ENCODE measurements at regions of chr15 and their contacts with region 1.

Region 1: GRCh38 chr15:90362936-90363212 is 10.8 kb downstream of the ZNF774 start:
- DNase-seq: no peak
- ATAC-seq: peak in 1 of 3 donors; percentile 46
- H3K4me3 ChIP-seq: no peak overlapping the region
- H3K4me3 Mint-ChIP-seq: peak overlapping the region; percentile 9
- H3K27ac ChIP-seq: no peak overlapping the region
- H3K27ac Mint-ChIP-seq: peak overlapping the region; percentile 64 to 78
- H3K4me1 ChIP-seq: peaks cover 13% of the 10 kb centered on the region
- H3K4me1 Mint-ChIP-seq: peaks cover 24 to 36% of the 10 kb centered on the region in 2 donors
- H3K27me3 ChIP-seq: no peaks in the 10 kb centered on the region
- H3K27me3 Mint-ChIP-seq: no peaks in the 10 kb centered on the region
- CTCF ChIP-seq: no peak

Region 2: DNA sequence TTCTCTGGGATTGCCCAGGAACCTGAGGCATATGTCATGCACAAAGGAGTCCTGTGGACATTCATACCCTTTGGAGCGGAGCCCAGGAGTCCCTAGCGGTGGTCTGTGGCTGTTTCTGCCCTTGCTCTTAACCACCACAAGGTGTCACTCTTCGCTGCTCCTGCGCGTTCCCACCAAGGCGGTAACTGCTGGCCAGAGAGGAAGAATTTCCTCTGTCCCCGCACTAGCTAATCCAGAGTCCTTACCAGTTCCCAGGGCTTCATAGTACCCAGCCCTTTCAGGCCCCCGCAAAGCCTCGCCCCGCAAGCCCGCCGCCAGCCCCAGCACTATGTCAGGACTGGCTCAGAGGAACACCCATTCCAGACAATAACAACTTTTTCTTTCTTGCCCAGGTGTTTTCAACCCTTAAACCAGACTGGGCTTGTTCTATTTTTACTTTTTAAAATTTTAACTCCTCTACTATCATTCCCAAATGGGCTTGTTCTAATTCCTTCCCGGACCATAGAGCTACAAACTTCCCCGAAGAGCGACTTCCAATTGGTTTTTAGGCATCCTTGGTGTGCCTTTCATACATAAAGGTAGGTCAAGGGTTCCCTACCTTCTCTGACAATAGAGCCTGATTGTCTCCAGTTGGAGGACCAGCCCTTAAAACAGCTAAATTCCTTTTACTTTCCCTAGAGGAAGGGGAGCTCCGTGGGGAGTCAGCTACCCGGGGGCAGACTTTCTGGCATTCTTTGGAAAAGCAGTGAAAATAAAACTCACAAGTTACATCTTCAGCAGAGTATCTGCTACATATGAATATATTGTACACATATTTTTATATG is 42.6 kb before region 1 on chr15:
- intact Hi-C with region 1: loop called (anchors 5 kb)
- DNase-seq: peak; percentile 55 to 88
- ATAC-seq: peak; percentile 96 to 100 (median 99)
- H3K4me3 ChIP-seq: no peak overlapping the region
- H3K4me3 Mint-ChIP-seq: peak overlapping the region; percentile 3
- H3K27ac ChIP-seq: no peak overlapping the region
- H3K27ac Mint-ChIP-seq: peak overlapping the region in 1 of 2 donors; percentile 23
- H3K4me1 ChIP-seq: peaks cover 4% of the 10 kb centered on the region
- H3K4me1 Mint-ChIP-seq: peaks cover 8 to 9% of the 10 kb centered on the region in 2 donors
- H3K27me3 ChIP-seq: no peaks in the 10 kb centered on the region
- H3K27me3 Mint-ChIP-seq: peaks cover 0 to 3% of the 10 kb centered on the region in 2 donors
- CTCF ChIP-seq: peak; percentile 91

Region 3: DNA sequence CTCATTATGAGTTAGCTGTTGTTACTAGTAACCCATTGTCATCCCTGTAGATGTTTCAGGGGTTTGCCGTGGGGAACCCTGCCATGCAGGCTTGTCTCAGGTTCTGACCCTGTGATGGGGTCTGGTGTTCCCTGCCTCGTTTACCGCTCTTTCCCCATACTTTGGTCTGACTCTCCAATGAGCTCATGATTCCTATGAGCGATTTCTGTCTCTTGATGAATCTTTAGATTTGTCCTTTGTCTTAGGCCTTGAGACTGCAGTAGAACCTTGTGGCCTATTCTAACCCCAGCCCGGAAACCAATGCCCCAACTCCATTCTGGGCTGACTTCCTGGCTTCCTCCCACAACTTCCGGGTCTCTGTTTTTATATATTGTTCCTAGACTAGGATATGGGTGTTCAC is 13.9 kb after region 1 on chr15:
- intact Hi-C with region 1: loop called (anchors 2 kb)
- DNase-seq: peak; percentile 54 to 85
- ATAC-seq: peak; percentile 87 to 96 (median 90)
- H3K4me3 ChIP-seq: no peak overlapping the region
- H3K4me3 Mint-ChIP-seq: peak overlapping the region; percentile 87
- H3K27ac ChIP-seq: peak overlapping the region; percentile 72
- H3K27ac Mint-ChIP-seq: peak overlapping the region; percentile 89 to 93
- H3K4me1 ChIP-seq: peaks cover 40% of the 10 kb centered on the region
- H3K4me1 Mint-ChIP-seq: peaks cover 49 to 52% of the 10 kb centered on the region in 2 donors
- H3K27me3 ChIP-seq: no peaks in the 10 kb centered on the region
- H3K27me3 Mint-ChIP-seq: no peaks in the 10 kb centered on the region
- CTCF ChIP-seq: no peak

Region 4: DNA sequence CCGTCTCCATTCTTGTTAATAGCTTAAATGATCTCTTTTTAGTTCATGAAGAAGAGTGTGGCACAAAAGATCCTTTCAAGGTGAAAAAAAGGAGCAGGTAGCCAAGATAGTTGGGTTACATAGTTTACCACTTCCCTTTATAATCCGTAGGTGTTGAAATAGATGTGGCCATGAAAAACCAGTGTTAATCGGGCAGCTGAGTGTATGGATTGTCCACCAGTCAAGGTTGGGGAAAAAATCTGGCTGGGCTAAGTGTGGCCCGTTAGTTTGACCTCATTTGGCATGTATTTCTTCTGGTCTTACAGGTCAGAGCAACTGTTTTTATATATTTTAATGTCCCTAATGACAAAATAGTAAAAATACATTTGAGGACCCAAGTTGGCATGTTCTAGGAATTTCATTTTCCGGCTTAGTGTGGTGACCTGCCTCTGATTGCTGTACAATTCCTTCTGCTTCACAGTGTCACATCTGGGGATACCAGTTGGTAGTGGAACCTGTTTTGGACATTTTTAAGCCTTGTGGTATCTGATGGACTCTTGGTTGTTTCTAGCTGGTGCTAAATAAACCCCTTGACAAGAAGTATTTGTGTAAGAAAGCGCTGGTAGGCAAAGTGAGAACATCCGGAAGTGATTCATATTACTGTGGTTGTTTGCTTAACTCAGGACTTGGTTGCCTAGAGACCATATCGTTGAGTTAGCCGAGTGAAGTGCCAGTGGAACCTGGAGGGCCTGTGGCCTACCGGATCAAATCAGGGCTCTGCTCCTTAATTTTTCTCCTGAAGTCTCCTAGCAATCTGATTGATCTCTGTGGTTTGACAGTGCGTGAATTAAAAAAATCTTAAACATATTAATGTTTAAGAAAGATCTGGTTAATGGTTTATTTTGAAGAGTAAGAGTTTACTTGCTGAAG is 37.8 kb after region 1 on chr15:
- intact Hi-C with region 1: loop called (anchors 5 kb)
- DNase-seq: peak; percentile 49 to 94
- ATAC-seq: peak; percentile 79 to 96 (median 96)
- H3K4me3 ChIP-seq: peak overlapping the region; percentile 30
- H3K4me3 Mint-ChIP-seq: peak overlapping the region; percentile 85
- H3K27ac ChIP-seq: peak overlapping the region; percentile 99
- H3K27ac Mint-ChIP-seq: peak overlapping the region; percentile 94 to 97
- H3K4me1 ChIP-seq: peaks cover 49% of the 10 kb centered on the region
- H3K4me1 Mint-ChIP-seq: peaks cover 70 to 79% of the 10 kb centered on the region in 2 donors
- H3K27me3 ChIP-seq: no peaks in the 10 kb centered on the region
- H3K27me3 Mint-ChIP-seq: no peaks in the 10 kb centered on the region
- CTCF ChIP-seq: no peak

Region 5: GRCh38 chr15:90412356-90413194 is 49.7 kb after region 1 on chr15:
- intact Hi-C with region 1: loop called (anchors 2 kb)
- DNase-seq: peak in 1 of 2 donors; percentile 48
- ATAC-seq: peak; percentile 29 to 66 (median 38)
- H3K4me3 ChIP-seq: no peak overlapping the region
- H3K4me3 Mint-ChIP-seq: peak overlapping the region; percentile 83
- H3K27ac ChIP-seq: peak overlapping the region; percentile 73
- H3K27ac Mint-ChIP-seq: peak overlapping the region; percentile 89 to 93
- H3K4me1 ChIP-seq: peaks cover 45% of the 10 kb centered on the region
- H3K4me1 Mint-ChIP-seq: peaks cover 86 to 91% of the 10 kb centered on the region in 2 donors
- H3K27me3 ChIP-seq: no peaks in the 10 kb centered on the region
- H3K27me3 Mint-ChIP-seq: no peaks in the 10 kb centered on the region
- CTCF ChIP-seq: no peak

Region 6: DNA sequence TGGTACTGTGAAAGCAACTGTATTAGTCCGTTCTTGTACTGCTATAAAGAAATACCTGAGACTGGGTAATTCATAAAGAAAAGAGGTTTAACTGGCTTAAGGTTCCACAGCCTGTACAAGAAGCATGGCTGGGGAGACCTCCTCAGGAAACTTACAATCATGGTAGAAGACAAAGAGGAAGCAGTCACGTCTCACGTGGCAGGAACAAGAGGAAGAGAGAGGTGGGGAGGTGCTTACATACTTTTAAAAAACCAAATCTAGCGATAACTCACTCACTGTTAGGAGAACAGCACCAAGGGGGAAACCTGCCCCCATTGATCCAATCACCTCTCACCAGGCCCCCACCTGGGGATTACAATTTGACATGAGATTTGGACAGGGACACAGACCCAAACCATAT is 74.1 kb after region 1 on chr15:
- intact Hi-C with region 1: loop called (anchors 5 kb)
- DNase-seq: no peak
- ATAC-seq: peak in 1 of 3 donors; percentile 47
- H3K4me3 ChIP-seq: no peak overlapping the region
- H3K4me3 Mint-ChIP-seq: no peak overlapping the region
- H3K27ac ChIP-seq: no peak overlapping the region
- H3K27ac Mint-ChIP-seq: peak overlapping the region; percentile 54 to 86
- H3K4me1 ChIP-seq: no peaks in the 10 kb centered on the region
- H3K4me1 Mint-ChIP-seq: peaks cover 69 to 72% of the 10 kb centered on the region in 2 donors
- H3K27me3 ChIP-seq: no peaks in the 10 kb centered on the region
- H3K27me3 Mint-ChIP-seq: no peaks in the 10 kb centered on the region
- CTCF ChIP-seq: no peak

Region 7: DNA sequence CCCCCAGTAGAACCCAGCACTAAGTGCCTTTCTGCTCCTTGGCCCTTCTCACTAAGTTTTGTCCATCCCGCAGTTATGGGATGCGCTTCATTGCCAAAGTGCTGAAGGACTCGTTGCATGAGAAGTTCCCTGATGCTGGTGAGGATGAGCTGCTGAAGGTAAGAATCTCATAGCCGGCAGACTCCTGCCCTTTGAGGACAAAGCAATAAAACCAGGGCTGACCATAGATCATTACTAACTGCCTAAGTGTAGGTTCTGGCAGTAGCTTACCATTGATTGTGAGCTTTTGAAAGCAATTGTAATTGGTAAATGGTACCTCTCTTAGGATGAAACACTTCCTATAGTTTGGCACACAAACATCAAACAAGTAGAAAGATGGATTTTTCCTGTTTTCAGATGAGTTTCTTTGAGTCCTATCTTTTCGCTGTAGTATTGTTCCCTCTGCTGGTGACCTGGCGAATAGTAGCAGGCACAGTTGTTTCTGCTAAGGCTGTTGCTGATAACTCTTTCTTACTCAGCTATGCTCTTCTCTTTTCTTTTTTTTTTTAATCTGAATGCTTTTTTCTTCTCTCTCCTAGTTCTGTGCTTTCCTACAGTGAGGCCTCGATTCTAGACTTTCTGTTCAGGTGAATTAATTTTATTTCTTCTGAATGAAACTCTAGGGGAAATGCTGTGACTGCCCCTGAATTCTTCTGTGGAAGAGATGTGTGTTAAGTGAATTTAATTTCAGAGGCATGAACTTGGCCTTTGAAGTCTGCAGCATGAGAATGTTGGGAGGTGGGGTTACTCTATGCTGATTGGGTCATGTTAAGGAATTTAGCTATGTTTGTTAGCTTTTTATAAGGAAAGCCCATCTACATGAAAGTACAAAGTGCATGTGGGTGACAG is 119.5 kb after region 1 on chr15:
- intact Hi-C with region 1: loop called (anchors 1 kb)
- DNase-seq: peak; percentile 29 to 73
- ATAC-seq: peak in 2 of 3 donors; percentile 55 to 69
- H3K4me3 ChIP-seq: no peak overlapping the region
- H3K4me3 Mint-ChIP-seq: peak overlapping the region; percentile 1
- H3K27ac ChIP-seq: no peak overlapping the region
- H3K27ac Mint-ChIP-seq: peak overlapping the region; percentile 62 to 76
- H3K4me1 ChIP-seq: peaks cover 21% of the 10 kb centered on the region
- H3K4me1 Mint-ChIP-seq: peaks cover 37 to 45% of the 10 kb centered on the region in 2 donors
- H3K27me3 ChIP-seq: no peaks in the 10 kb centered on the region
- H3K27me3 Mint-ChIP-seq: no peaks in the 10 kb centered on the region
- CTCF ChIP-seq: peak; percentile 73

Measured in natural killer cell (primary cell).